ENCODE measurements at regions of chr6 and their contacts with region 1.

Region 1: DNA sequence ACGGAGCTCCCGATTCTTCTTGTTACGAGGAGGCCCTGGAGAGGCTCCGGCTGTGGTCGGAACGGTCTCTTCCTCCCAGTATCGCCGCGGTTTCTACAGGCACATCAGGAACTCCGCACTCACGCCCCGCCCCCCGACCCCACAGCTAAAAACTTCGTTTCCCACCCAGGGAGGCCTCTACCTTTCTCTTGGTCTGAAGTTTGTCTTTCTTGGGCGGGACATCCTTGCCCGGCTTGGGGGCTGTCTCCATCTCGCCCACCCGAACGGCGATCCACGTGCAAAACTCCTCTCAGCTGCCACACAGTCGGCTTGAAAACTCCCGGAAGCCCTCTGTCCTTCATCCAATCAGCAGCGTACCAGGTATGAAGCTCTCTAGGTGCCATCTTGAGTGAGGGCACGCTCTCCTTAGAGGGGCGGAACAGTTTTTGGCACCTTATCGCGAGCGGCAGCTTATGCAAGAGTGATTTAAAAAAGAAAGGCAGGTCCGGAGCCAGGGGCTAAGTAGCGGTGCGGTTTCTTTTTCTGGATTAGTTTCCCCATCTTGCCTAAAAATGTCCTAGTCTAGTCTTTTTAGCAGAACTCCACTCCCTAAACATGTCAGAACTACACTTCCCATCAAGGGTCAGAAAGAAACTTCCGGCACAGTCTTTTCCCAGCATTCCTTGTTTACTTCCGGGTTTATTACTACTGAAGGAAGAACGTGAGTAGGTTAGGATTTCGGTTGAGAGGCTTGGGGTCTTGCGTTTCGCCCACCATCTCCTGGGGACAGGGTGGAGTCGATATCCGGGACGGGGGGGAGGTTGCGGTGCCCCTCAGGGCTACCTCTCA is at the starts of genes PFDN6 and WDR46:
- DNase-seq: peak; percentile 95
- H3K4me3 Mint-ChIP-seq: peak within 1 kb of the TSS; percentile 100
- H3K27ac Mint-ChIP-seq: peak within 1 kb of the TSS; percentile 95
- H3K4me1 Mint-ChIP-seq: peaks cover 28% of the 10 kb centered on the region
- H3K27me3 Mint-ChIP-seq: no peaks in the 10 kb centered on the region
- total RNA-seq, gene PFDN6: 114 and 132 TPM in 2 replicates
- total RNA-seq, gene WDR46: 106 and 120 TPM in 2 replicates

Region 2: DNA sequence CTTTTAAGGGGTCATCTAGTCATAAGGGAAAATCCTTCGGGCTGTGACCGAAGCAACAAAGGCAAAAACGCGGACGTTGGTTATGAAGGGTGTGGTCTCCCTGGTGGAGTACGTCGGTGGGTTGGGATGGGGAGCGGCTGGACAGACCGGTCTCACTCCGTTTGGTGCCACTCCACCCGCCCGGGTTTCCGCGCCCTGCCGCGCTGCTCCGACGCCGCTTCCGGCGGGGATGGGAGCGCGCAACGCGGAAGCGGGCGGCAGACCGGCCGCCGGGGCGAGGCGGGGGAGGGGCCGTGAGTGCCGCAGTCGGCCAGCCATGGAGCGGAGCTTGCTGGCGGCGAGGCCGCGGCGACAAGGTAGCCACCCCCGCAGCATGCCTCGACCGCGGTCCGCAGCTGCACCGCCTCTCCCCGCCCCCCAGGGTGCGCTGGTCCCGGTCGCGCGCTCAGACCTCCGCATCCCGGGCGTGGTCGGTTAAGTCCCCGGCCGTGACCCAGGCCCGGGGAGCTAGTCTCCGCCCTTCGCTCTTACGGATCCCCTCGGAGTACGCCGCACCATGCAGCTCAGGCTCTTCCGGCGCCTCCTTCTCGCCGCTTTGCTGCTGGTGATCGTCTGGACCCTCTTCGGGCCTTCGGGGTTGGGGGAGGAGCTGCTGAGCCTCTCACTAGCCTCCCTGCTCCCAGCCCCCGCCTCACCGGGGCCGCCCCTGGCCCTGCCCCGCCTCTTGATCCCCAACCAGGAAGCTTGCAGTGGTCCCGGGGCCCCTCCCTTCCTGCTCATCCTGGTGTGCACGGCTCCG is 12.1 kb before region 1 on chr6 and contains the start of gene B3GALT4:
- intact Hi-C with region 1: loop called (anchors 1 kb)
- DNase-seq: peak; percentile 94
- H3K4me3 Mint-ChIP-seq: peak within 1 kb of the TSS; percentile 94
- H3K27ac Mint-ChIP-seq: peak within 1 kb of the TSS; percentile 91
- H3K4me1 Mint-ChIP-seq: peaks cover 56% of the 10 kb centered on the region
- H3K27me3 Mint-ChIP-seq: no peaks in the 10 kb centered on the region
- total RNA-seq, gene B3GALT4: 4.1 and 4.6 TPM in 2 replicates